Dorsolateral prefrontal cortex (tissue), 120 donors: ENCODE measurements at regions of chr1 and their contacts with region 1.

Region 1: GRCh38 chr1:200323918-200324317 is 85.9 kb downstream of the ZNF281 start:
- DNase-seq: no peak
- H3K4me3 ChIP-seq: no peak overlapping the region
- H3K27ac ChIP-seq: no peak overlapping the region
- H3K27me3 ChIP-seq: peaks cover 0 to 3% (median 0%) of the 10 kb centered on the region in 45 donors
- CTCF ChIP-seq: no peak

Region 2: DNA sequence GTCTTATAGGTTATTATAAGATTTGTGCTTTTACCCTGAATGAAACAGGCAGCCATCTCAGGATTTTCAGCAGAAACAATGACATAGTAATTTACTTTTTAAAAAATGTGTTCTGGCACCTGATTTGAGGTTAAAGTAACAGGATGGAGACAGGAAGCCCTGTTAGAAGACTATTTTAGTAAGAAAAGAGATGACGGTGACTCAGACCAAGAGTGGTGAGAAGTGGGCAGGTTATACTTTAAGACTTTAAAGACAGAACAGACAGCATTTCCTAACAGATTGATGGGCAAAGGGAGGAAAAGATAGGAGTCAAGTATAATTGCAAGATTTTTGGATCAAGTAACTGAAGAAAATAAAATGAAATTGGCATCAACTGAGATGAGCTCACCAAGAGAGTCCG is 733.2 kb before region 1 on chr1:
- intact Hi-C with region 1: no loop called
- DNase-seq: no peak
- H3K4me3 ChIP-seq: no peak overlapping the region
- H3K27ac ChIP-seq: no peak overlapping the region
- H3K27me3 ChIP-seq: no peaks in the 10 kb centered on the region
- CTCF ChIP-seq: no peak

Region 3: GRCh38 chr1:200090252-200091096 is 233.4 kb before region 1 on chr1:
- intact Hi-C with region 1: no loop called
- DNase-seq: no peak
- H3K4me3 ChIP-seq: no peak overlapping the region
- H3K27ac ChIP-seq: no peak overlapping the region
- H3K27me3 ChIP-seq: peaks cover 0 to 8% (median 0%) of the 10 kb centered on the region in 45 donors
- CTCF ChIP-seq: no peak

Region 4: GRCh38 chr1:200364091-200364759 is 40.3 kb after region 1 on chr1:
- intact Hi-C with region 1: loop called in 1 of 2 experiments (anchors 5 kb)
- DNase-seq: no peak
- H3K4me3 ChIP-seq: no peak overlapping the region
- H3K27ac ChIP-seq: peak overlapping the region in 51 of 59 donors; percentile 6 to 96 (median 85)
- H3K27me3 ChIP-seq: no peaks in the 10 kb centered on the region
- CTCF ChIP-seq: no peak